GM10248 (cell line): ENCODE measurements at regions of chr2 and their contacts with region 1.

Region 1: GRCh38 chr2:56183643-56184499 is at the start of gene CCDC85A:
- DNase-seq: peak; percentile 87
- CTCF ChIP-seq: peak; percentile 89

Region 2: GRCh38 chr2:55761024-55761423 is 422.8 kb before region 1 on chr2:
- CTCF ChIA-PET with region 1: no interaction called
- POLR2A ChIA-PET with region 1: no interaction called
- DNase-seq: no peak
- CTCF ChIP-seq: no peak

Region 3: DNA sequence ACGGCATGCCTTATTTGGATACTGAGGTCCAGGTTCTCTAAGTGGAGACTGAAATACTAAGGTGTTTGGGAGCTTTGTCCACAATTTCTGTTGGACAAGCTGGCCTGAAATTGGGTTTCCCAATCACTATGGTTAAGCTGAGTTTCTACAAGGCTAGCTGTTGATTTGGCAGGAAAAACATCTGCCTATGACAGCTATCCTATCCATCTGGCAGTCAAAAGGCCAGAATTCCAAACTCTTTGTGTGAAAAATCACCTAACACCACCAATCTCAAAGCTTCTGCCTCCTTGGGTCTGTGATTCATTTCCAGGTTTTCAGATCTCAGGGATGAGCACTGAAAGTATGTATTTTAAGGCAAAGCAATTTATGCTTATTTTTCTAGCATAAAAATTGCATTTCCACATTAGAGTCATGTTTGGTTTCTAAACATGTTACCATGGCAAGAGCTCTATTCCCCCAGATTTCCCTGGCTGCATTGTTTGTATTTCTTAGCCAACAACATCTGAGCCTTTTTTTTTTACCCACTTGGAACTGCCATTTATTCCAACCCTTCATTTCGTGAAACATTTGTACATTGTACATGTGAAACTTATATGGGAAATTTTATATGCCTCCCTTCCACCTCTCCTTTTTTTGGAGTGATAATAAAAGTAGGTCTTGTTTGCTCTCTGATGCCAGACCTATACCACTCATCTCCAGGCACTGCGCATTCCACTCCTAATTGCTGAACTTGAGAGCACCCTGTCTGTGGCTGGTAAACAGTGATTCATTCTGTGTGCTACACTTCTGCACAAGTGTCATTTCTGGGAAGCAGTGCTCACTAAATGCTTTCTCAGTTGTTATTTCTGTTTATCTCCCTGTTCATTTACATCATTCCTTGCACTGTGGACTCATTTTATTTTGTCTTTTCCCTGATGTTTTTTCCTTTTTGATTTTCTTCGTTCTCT is 16.0 kb before region 1 on chr2:
- CTCF ChIA-PET with region 1: interaction called, 13 read pairs
- POLR2A ChIA-PET with region 1: no interaction called
- DNase-seq: no peak
- CTCF ChIP-seq: no peak

Region 4: DNA sequence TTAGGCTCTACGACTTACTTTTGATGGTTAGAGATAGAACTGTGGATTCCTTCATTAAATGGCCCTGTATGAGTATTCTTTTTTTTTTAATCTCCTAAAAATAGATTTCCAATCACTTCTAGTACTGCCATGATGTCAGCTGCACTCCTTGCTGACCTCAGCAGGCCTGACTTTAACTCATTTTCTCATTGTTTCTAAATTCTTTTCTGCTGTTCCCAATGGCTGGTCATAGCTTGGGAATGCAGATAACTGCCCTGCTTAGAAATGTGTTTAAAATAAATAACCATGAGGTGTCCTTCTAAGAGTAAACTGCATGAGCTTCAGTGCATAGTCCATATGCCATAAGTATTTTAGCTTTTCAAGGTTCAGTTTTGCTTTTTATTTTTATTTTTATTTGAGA is 15.6 kb after region 1 on chr2:
- CTCF ChIA-PET with region 1: interaction called, 20 read pairs
- POLR2A ChIA-PET with region 1: no interaction called
- DNase-seq: no peak
- CTCF ChIP-seq: no peak

Region 5: GRCh38 chr2:56376699-56377665 is 193.1 kb after region 1 on chr2:
- CTCF ChIA-PET with region 1: no interaction called
- POLR2A ChIA-PET with region 1: no interaction called
- DNase-seq: no peak
- CTCF ChIP-seq: no peak

Region 6: DNA sequence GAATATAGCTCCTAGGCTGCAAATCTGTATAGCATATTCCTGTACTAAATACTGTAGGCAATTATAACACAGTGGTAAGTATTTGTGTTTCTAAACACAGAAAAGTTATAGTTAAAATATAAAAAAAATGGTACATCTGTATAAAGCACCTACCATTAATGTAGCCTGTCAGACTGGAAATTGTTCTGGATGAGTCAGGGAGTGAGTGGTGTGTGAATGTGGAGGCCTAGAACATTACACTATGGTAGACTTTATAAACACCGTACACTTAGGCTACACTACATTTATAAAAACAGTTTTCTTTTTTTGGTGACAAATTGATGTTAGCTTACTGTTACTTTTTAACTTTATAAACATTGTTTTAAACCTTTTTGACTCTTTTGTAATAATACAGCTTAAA is 226.3 kb after region 1 on chr2:
- CTCF ChIA-PET with region 1: no interaction called
- POLR2A ChIA-PET with region 1: no interaction called
- DNase-seq: no peak
- CTCF ChIP-seq: no peak

Region 7: DNA sequence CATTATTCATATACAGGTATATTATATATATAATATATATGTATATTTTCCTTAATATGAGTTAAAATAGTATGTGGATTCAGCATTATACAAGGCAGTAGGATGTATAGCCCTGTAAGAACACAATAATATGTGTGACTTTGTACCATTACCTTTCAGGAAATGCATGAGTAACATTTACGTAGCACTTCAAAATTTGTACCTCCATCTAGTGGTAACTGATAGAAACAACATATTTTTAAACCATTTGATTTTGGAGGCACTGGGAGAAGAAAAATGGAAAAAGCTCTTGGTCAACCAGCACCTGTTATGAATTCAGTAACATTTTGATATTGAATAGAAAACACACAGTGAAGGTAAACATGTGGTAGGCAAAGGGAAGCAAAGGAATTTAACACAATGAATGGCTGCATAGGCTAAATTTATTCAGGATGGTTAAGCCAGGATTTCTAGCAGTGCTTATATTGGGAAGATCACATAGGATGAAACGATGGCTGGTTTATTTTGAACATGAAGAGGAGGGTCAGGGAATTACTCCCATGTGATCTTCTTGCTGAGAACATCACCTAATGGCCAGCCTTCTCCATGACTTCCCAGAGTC is 565.4 kb after region 1 on chr2:
- CTCF ChIA-PET with region 1: interaction called, 30 read pairs
- POLR2A ChIA-PET with region 1: no interaction called
- DNase-seq: peak; percentile 4
- CTCF ChIP-seq: peak; percentile 44

Region 8: DNA sequence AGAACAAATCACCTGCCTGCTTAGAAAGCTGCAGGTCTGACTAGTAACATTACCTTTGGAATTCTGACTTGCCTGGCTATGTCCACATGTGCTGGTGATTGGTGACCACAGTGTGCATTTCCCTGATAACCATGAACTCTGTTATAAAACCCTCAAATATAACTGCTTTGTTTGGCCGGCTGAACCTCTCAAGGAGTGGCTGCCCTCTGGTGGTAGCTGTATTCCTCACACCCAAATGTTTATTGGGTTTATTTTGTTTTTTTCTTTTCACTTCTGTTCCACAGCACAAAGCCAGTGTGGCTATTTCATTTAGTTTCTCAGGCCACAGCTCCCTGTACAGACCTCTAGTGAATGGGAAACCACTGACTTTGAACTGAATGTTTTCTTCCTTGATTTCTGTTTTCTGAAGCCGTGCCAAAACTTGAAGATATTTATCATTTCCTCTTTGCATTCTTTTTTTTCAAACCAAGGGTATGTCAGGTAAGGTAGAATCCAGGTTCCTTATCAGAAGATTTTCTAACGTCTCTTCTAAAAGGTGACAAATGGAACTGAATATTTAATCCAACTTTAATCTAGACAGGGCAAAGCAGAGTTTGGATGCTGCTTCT is 1313.7 kb after region 1 on chr2:
- CTCF ChIA-PET with region 1: interaction called, 30 read pairs
- POLR2A ChIA-PET with region 1: no interaction called
- DNase-seq: peak; percentile 34
- CTCF ChIP-seq: peak; percentile 80

Region 9: DNA sequence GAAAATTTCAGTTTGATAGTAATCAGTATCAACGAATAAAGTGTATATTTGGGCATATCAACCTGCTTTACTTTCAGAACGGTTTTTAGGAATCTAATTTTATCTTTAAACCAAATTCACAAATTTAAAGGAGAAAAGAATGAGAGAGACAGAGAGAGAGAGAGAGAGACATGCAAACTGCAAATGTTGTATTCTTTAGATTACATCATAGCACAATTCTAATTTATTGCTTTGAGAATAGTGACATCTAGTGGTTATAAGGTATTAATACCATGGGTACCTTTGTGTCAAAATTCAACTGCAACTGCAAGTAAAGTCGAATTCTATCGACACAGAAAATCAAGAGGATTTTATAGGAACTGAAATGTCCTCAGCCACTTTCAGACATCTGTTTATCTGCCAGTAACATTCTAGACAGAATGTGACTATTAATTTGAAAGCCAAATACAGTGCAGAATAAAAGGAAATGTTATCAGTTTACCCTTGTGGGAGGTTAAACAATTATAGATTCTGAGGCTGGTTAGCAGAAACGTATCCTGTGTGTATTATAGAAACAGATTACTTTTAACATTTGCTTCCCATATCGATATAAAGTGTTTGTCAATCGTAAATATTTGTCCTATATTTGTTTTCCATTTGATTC is 1332.9 kb after region 1 on chr2:
- CTCF ChIA-PET with region 1: interaction called, 27 read pairs
- POLR2A ChIA-PET with region 1: no interaction called
- DNase-seq: peak; percentile 40
- CTCF ChIP-seq: peak; percentile 54